B cell (primary cell): ENCODE measurements at regions of chr1 and their contacts with region 1.

Region 1: GRCh38 chr1:156054500-156055280 is at the start of gene LAMTOR2:
- DNase-seq: peak; percentile 94
- ATAC-seq: peak; percentile 73
- H3K4me3 ChIP-seq: peak within 1 kb of the TSS; percentile 78 to 99 (median 96)
- H3K4me3 Mint-ChIP-seq: peak within 1 kb of the TSS; percentile 92
- H3K27ac ChIP-seq: peak within 1 kb of the TSS; percentile 77 to 85
- H3K27ac Mint-ChIP-seq: peak within 1 kb of the TSS; percentile 92
- H3K4me1 ChIP-seq: peaks cover 8 to 24% of the 10 kb centered on the region in 2 donors
- H3K4me1 Mint-ChIP-seq: peaks cover 32% of the 10 kb centered on the region
- H3K27me3 ChIP-seq: no peaks in the 10 kb centered on the region
- H3K27me3 Mint-ChIP-seq: no peaks in the 10 kb centered on the region
- CTCF ChIP-seq: no peak
- total RNA-seq, gene LAMTOR2: 31.5 and 37.8 TPM in 2 replicates

Region 2: GRCh38 chr1:155277070-155277895 is 777.4 kb before region 1 on chr1 and contains the start of gene HCN3:
- CTCF ChIA-PET with region 1: no interaction called
- POLR2A ChIA-PET with region 1: interaction called, 5 read pairs
- intact Hi-C with region 1: loop called (anchors 5 kb)
- DNase-seq: peak; percentile 95
- ATAC-seq: peak; percentile 75
- H3K4me3 ChIP-seq: peak within 1 kb of the TSS; percentile 49 to 64 (median 59)
- H3K4me3 Mint-ChIP-seq: peak within 1 kb of the TSS; percentile 83
- H3K27ac ChIP-seq: peak within 1 kb of the TSS in 1 of 2 donors; percentile 33
- H3K27ac Mint-ChIP-seq: peak within 1 kb of the TSS; percentile 41
- H3K4me1 ChIP-seq: peaks cover 25 to 36% of the 10 kb centered on the region in 2 donors
- H3K4me1 Mint-ChIP-seq: peaks cover 35% of the 10 kb centered on the region
- H3K27me3 ChIP-seq: no peaks in the 10 kb centered on the region
- H3K27me3 Mint-ChIP-seq: no peaks in the 10 kb centered on the region
- CTCF ChIP-seq: peak; percentile 76
- total RNA-seq, gene HCN3: 9.0 and 9.2 TPM in 2 replicates

Region 3: DNA sequence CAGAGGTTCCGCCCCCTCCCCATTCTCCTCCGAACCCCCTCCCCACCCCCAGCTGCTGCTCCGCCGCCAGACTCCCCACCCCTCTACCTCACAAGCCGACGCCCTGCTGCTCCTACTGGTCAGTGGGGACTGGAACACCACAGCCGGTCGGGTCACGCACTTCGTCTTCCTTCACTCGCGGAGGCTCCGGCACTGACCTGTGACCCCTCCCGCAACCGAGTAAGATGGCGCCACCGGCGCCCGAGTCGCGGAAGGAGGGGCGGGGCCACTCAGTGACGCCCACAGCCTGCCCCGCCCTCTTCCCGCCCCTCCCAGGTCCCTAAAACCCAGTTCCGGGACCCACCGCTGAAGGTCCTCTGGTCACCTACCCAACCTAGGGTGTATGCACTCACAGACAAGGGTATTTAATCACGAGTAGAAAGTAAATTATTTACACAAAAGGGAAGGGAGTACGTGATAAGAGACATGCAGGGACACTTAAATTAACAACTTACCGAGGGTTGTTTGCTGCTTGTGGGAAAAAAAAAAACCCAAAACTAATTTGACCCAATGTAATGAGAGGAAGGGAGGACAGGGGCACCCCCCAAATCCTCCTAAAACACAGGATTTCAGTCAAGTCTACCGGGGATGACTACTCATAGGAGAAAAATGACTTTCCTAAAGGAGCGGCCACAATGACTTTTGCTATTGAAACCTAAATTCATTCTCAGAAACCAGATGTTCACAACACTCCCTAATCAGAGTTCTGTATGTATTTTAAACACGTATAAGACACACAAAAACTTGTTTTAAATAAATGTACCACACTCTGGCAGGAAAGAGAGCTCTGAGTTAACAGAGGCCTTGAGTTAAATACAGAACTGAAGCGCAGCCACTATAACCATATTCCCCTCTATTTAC is 143.3 kb before region 1 on chr1 and contains the start of gene RIT1:
- CTCF ChIA-PET with region 1: no interaction called
- POLR2A ChIA-PET with region 1: no interaction called
- intact Hi-C with region 1: loop called (anchors 1 kb)
- DNase-seq: peak; percentile 91
- ATAC-seq: peak; percentile 98
- H3K4me3 ChIP-seq: peak within 1 kb of the TSS; percentile 64 to 90 (median 71)
- H3K4me3 Mint-ChIP-seq: peak within 1 kb of the TSS; percentile 96
- H3K27ac ChIP-seq: peak within 1 kb of the TSS; percentile 59 to 79
- H3K27ac Mint-ChIP-seq: peak within 1 kb of the TSS; percentile 97
- H3K4me1 ChIP-seq: peaks cover 14 to 16% of the 10 kb centered on the region in 2 donors
- H3K4me1 Mint-ChIP-seq: peaks cover 23% of the 10 kb centered on the region
- H3K27me3 ChIP-seq: no peaks in the 10 kb centered on the region
- H3K27me3 Mint-ChIP-seq: no peaks in the 10 kb centered on the region
- CTCF ChIP-seq: no peak
- total RNA-seq, gene RIT1: 43.4 and 45.7 TPM in 2 replicates

Region 4: DNA sequence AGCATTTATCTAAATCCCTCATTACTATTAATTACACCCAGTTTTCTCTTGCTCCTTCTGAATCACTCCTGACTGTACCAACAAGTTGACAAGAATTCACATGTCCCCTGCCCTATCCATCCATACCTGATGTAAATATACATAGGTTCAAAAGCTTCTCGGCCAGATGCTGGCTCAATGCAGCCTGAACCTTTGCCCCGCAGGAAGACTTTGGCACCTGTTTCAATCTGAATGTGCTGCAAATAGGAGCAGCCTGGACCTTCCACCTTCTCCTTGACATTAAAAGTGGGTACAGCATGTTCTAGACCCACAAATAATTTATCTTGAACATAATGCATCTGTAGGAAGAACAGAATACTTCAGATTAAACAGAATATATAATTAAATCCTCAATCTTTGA is 129.2 kb before region 1 on chr1:
- CTCF ChIA-PET with region 1: no interaction called
- POLR2A ChIA-PET with region 1: no interaction called
- intact Hi-C with region 1: no loop called
- DNase-seq: no peak
- ATAC-seq: no peak
- H3K4me3 ChIP-seq: no peak overlapping the region
- H3K4me3 Mint-ChIP-seq: no peak overlapping the region
- H3K27ac ChIP-seq: no peak overlapping the region
- H3K27ac Mint-ChIP-seq: no peak overlapping the region
- H3K4me1 ChIP-seq: peaks cover 0 to 4% of the 10 kb centered on the region in 2 donors
- H3K4me1 Mint-ChIP-seq: peaks cover 4% of the 10 kb centered on the region
- H3K27me3 ChIP-seq: no peaks in the 10 kb centered on the region
- H3K27me3 Mint-ChIP-seq: no peaks in the 10 kb centered on the region
- CTCF ChIP-seq: no peak

Region 5: DNA sequence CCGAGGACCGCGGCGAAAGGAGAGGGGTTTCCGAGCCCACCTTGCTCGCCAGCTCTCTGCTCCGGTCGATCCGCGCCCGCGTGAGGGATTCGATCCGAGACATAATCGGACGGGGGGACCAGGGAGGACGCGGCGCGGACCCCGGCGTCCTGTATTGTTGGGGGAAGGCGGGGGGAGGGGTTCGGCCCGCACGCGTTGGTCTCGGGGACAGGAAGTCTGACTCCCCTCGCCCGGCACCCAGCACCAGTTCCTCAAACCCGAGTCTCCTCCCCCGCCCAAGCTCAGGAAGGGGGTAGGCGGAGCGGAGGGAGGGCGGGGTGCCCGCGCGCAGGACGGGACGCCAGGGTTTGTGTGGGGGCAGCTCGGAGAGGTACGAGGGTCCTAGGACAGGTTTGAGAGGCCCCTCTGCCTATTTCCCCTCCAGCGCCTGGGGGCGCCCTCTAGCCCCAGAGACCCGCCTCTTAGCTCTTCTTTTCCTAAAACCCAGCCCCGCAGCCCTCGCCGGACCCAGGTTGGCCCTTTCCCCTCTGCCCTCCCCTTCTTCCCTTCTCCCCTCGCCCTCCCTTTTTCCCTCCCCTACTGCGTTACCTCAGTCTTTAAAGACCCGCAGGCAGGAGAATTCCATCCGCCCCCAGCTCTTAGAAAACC is 76.2 kb before region 1 on chr1 and contains the start of gene ARHGEF2:
- CTCF ChIA-PET with region 1: no interaction called
- POLR2A ChIA-PET with region 1: interaction called, 3 read pairs
- intact Hi-C with region 1: loop called (anchors 2 kb)
- DNase-seq: peak; percentile 89
- ATAC-seq: peak; percentile 76
- H3K4me3 ChIP-seq: peak within 1 kb of the TSS; percentile 76 to 93 (median 81)
- H3K4me3 Mint-ChIP-seq: peak within 1 kb of the TSS; percentile 95
- H3K27ac ChIP-seq: peak within 1 kb of the TSS; percentile 70 to 91
- H3K27ac Mint-ChIP-seq: peak within 1 kb of the TSS; percentile 94
- H3K4me1 ChIP-seq: peaks cover 63 to 73% of the 10 kb centered on the region in 2 donors
- H3K4me1 Mint-ChIP-seq: peaks cover 81% of the 10 kb centered on the region
- H3K27me3 ChIP-seq: no peaks in the 10 kb centered on the region
- H3K27me3 Mint-ChIP-seq: no peaks in the 10 kb centered on the region
- CTCF ChIP-seq: peak; percentile 6
- total RNA-seq, gene ARHGEF2: 245 and 247 TPM in 2 replicates

Region 6: DNA sequence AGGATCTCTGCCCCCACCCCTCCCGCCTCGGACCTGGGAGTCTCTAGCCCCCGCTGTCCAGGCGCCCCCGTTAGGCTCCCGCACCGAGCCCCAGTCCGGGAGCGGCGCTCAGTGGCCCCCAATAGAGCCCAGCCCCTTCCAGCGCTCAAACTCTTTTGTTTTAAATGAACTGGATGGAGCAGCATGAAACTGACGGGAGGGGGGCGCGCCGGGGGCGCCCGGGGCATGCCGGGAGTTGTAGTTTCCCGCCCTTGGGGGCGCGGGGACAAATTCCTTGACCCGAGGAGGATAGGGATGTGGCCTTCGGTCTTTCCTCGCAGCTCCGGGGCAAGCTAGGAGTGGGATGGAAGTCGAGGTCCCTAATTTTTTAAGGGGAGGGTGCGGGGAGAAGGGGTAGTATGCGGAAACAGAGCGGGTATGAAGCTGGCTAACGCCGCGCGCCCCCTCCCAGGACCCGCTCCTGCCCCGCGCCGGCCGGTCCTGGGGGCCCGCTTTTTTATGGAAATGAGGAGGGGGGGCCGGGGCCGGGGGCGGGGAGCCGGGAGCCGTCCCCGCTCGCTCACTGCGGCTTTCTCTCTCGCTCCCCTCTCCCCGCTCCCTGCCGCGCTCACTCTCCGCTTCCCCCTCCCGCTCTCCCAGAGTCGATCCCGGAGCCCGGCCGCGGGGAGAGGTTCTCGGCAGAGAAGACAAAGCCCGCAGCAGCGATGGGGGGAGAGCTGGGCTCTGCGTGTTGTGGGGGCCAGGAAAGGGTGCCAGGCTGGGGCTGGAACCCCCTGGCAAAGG is 27.8 kb after region 1 on chr1 and contains the start of gene MEX3A:
- CTCF ChIA-PET with region 1: no interaction called
- POLR2A ChIA-PET with region 1: no interaction called
- intact Hi-C with region 1: loop called (anchors 1 kb)
- DNase-seq: peak; percentile 74
- ATAC-seq: peak; percentile 85
- H3K4me3 ChIP-seq: peak within 1 kb of the TSS; percentile 44 to 87 (median 81)
- H3K4me3 Mint-ChIP-seq: peak within 1 kb of the TSS; percentile 91
- H3K27ac ChIP-seq: peak within 1 kb of the TSS in 1 of 2 donors; percentile 26
- H3K27ac Mint-ChIP-seq: peak within 1 kb of the TSS; percentile 63
- H3K4me1 ChIP-seq: peaks cover 11 to 18% of the 10 kb centered on the region in 2 donors
- H3K4me1 Mint-ChIP-seq: peaks cover 22% of the 10 kb centered on the region
- H3K27me3 ChIP-seq: peaks cover 0 to 49% (median 21%) of the 10 kb centered on the region in 4 experiments
- H3K27me3 Mint-ChIP-seq: peaks cover 12% of the 10 kb centered on the region
- CTCF ChIP-seq: no peak
- total RNA-seq, gene MEX3A: 0.73 and 1.1 TPM in 2 replicates